WTC11 (cell line): ENCODE measurements at regions of chr3 and their contacts with region 1.

Region 1: DNA sequence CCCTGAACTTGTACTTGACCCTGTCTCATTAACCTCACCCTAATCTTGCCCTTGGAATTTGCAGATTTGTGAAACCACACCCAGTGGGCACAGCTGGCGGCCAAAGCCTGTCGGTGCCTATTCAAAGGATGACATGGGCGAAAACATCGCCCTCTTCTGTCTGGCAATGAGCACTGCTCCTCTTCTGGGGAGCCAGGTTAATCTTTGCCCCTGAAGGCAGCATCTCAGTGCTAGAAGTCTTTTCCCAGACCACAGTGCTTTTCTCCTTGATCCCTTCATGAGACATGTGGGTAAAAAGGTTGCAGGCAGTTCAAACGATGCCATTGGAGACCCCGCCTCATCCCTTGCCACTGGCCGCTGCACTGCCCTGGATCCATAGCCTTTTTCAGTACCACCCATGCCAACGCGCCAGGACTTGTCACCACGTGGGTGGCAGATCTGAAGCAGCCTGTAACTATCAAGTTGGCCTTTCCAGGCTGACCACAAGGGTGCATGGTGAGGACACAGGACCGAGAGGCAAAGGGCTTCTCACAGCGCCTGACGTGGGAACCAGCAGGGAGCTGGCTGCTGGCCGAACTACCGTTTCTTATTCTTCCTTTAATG is 6.5 kb upstream of the DNASE1L3 start:
- DNase-seq: peak; percentile 78
- ATAC-seq: peak; percentile 91
- H3K4me3 Mint-ChIP-seq: peak overlapping the region; percentile 46
- H3K27ac Mint-ChIP-seq: peak overlapping the region; percentile 71; the same call in 1 of the 2 replicates
- H3K4me1 Mint-ChIP-seq: peaks cover 10% of the 10 kb centered on the region
- H3K27me3 Mint-ChIP-seq: no peaks in the 10 kb centered on the region
- CTCF ChIP-seq: peak; percentile 51; the same call in 1 of the 2 replicates

Region 2: DNA sequence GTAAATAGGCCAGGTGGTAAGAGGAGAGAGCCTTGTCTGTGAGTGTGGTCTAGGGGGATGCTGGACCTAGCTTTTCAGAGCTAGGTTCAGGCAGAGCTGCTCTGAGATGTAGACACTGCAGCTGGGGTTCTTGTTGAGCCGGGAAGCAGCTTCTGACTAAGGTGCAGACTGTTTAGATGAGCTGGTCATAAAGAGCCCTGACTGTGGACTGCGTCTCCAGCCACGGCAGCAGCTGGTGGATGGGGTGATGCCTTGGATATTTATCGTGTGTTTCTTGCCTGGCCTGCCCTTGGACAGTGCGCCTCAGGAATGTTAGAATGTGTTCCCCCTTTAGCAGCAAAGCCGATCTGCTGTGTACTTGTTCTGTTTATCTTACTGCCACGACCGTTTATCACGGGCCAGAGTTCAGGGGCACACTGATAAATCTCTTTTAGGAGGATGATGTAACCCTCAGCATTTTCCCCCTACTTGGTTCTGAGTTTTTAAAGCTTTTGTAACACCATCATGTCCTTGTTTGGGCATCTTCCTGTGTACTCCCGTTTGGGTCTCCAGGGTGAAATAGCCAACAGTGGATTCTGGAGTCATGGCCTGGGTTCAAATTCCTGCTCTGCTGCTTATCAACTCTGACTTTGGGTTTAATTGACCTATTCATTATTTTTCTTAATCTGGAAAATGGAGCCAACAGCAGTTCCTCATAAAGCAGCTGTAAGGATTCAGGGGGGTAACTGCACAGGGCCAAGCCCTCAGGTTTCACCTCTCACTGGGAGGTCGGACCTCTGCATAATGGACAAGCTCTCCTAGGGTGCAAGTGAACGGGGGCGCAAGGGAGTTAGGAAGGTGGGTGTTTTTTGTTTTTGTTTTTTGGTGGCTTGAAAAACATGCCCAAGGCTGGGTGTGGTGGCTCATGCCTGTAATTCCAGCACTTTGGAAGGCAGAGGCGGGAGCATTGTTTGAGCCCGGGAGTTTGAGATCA is 157.7 kb before region 1 on chr3:
- CTCF ChIA-PET with region 1: no interaction called
- POLR2A ChIA-PET with region 1: interaction called, 10 read pairs
- DNase-seq: no peak
- ATAC-seq: peak; percentile 35
- H3K4me3 Mint-ChIP-seq: no peak overlapping the region
- H3K27ac Mint-ChIP-seq: peak overlapping the region; percentile 87
- H3K4me1 Mint-ChIP-seq: peaks cover 60% of the 10 kb centered on the region
- H3K27me3 Mint-ChIP-seq: no peaks in the 10 kb centered on the region
- CTCF ChIP-seq: no peak

Region 3: GRCh38 chr3:58231666-58232065 is 14.4 kb after region 1 on chr3:
- CTCF ChIA-PET with region 1: interaction called, 16 read pairs
- POLR2A ChIA-PET with region 1: no interaction called
- DNase-seq: no peak
- ATAC-seq: no peak
- H3K4me3 Mint-ChIP-seq: no peak overlapping the region
- H3K27ac Mint-ChIP-seq: no peak overlapping the region
- H3K4me1 Mint-ChIP-seq: peaks cover 4% of the 10 kb centered on the region
- H3K27me3 Mint-ChIP-seq: peaks cover 43% of the 10 kb centered on the region
- CTCF ChIP-seq: no peak

Region 4: GRCh38 chr3:58249358-58250092 is 32.2 kb after region 1 on chr3:
- CTCF ChIA-PET with region 1: interaction called, 21 read pairs
- POLR2A ChIA-PET with region 1: no interaction called
- DNase-seq: no peak
- ATAC-seq: peak; percentile 77
- H3K4me3 Mint-ChIP-seq: no peak overlapping the region
- H3K27ac Mint-ChIP-seq: peak overlapping the region; percentile 76; the same call in 1 of the 2 replicates
- H3K4me1 Mint-ChIP-seq: peaks cover 6% of the 10 kb centered on the region
- H3K27me3 Mint-ChIP-seq: no peaks in the 10 kb centered on the region
- CTCF ChIP-seq: no peak

Region 5: GRCh38 chr3:58299839-58300516 is 82.7 kb after region 1 on chr3:
- CTCF ChIA-PET with region 1: interaction called, 27 read pairs
- POLR2A ChIA-PET with region 1: no interaction called
- DNase-seq: no peak
- ATAC-seq: peak; percentile 65
- H3K4me3 Mint-ChIP-seq: no peak overlapping the region
- H3K27ac Mint-ChIP-seq: no peak overlapping the region
- H3K4me1 Mint-ChIP-seq: peaks cover 9% of the 10 kb centered on the region
- H3K27me3 Mint-ChIP-seq: peaks cover 14% of the 10 kb centered on the region
- CTCF ChIP-seq: peak; percentile 48; the same call in 1 of the 2 replicates

Region 6: DNA sequence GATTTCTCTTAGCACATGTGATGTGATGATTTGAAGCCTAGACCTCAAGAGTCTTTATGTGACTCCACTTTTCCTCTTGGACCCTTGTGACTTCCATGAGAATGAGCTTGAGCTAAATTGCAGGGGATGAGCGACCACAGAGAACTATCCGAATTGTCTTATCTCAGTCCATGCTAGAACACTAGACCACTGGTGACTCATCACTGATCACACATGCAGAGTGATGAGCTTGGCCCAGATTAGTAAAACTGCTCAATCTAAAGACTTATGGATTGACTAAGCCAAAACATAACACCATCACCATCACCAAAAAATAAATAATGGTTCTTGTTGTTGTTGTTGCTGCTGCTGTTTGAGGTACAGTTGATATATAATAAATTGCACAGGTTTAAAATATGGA is 946.6 kb after region 1 on chr3:
- CTCF ChIA-PET with region 1: no interaction called
- POLR2A ChIA-PET with region 1: no interaction called
- DNase-seq: no peak
- ATAC-seq: no peak
- H3K4me3 Mint-ChIP-seq: no peak overlapping the region
- H3K27ac Mint-ChIP-seq: no peak overlapping the region
- H3K4me1 Mint-ChIP-seq: peaks cover 7% of the 10 kb centered on the region
- H3K27me3 Mint-ChIP-seq: no peaks in the 10 kb centered on the region
- CTCF ChIP-seq: no peak